ENCODE measurements at regions of chr3 and their contacts with region 1.

Region 1: GRCh38 chr3:57530071-57530608 is 14.0 kb downstream of the DNAH12 start:
- DNase-seq: peak; percentile 29 to 77
- H3K4me3 ChIP-seq: no peak overlapping the region
- H3K27ac ChIP-seq: peak overlapping the region; percentile 51
- H3K4me1 ChIP-seq: peaks cover 22% of the 10 kb centered on the region
- H3K27me3 ChIP-seq: no peaks in the 10 kb centered on the region
- CTCF ChIP-seq: no peak

Region 2: DNA sequence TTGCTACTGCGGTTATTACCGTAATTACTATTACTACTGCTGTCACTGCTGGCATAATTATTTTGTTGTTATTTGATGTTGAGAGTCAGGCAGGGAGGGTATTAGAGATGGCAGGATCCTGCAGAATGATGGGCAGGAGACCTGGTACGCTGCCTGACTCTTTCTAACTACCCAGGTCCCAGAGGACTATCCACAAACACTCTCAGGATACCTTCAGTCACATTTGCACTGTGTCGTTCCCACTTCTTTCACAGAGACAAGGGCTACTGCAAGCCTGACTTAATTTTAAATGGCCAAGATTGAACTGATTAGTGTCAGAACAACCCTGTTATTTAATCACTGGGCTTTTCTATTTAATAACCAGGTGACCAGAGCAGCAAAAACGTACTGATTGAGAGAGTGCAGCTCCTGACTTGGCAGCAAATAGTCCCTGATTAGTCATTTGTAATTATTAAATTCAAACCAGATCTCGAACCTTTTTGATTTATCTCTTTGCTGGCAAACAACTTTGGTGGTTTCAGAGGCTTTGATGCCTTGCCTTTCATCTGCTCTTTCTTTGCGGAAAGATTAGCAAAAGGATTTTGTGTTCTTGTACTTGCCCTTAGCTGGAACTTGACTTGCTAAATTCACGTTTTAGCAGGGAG is 639.6 kb before region 1 on chr3:
- CTCF ChIA-PET with region 1: no interaction called
- POLR2A ChIA-PET with region 1: no interaction called
- intact Hi-C with region 1: no loop called
- DNase-seq: no peak
- H3K4me3 ChIP-seq: no peak overlapping the region
- H3K27ac ChIP-seq: no peak overlapping the region
- H3K4me1 ChIP-seq: no peaks in the 10 kb centered on the region
- H3K27me3 ChIP-seq: no peaks in the 10 kb centered on the region
- CTCF ChIP-seq: no peak

Region 3: GRCh38 chr3:57518266-57518915 is 11.7 kb before region 1 on chr3:
- CTCF ChIA-PET with region 1: no interaction called
- POLR2A ChIA-PET with region 1: no interaction called
- intact Hi-C with region 1: loop called (anchors 1 kb)
- DNase-seq: peak; percentile 69 to 93
- H3K4me3 ChIP-seq: no peak overlapping the region; the same call in 1 of the 2 replicates
- H3K27ac ChIP-seq: peak overlapping the region; percentile 92
- H3K4me1 ChIP-seq: peaks cover 38% of the 10 kb centered on the region
- H3K27me3 ChIP-seq: no peaks in the 10 kb centered on the region
- CTCF ChIP-seq: no peak

Region 4: DNA sequence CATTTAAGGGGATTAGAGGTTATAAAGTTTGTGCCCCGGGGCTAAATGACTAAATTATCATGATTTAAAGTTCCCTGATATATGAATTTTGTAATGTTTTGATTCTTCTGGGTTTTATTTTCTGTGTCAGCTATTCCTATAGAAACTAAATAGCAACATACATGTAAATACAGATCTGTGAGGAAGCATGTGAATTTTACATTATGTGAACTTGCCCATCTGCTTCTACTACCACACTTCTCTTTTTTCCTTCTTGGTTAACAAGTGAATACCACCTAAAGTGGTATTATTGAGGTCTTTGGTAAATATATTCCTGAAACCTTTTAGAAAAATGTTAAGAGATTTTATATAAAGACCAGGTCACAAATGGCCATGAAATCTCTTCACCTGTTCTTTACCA is 255.3 kb after region 1 on chr3:
- CTCF ChIA-PET with region 1: no interaction called
- POLR2A ChIA-PET with region 1: interaction called, 17 read pairs
- intact Hi-C with region 1: no loop called
- DNase-seq: no peak
- H3K4me3 ChIP-seq: no peak overlapping the region
- H3K27ac ChIP-seq: peak overlapping the region; percentile 16; the same call in 1 of the 2 replicates
- H3K4me1 ChIP-seq: peaks cover 18% of the 10 kb centered on the region; the same call in 1 of the 2 replicates
- H3K27me3 ChIP-seq: no peaks in the 10 kb centered on the region
- CTCF ChIP-seq: no peak

Region 5: GRCh38 chr3:58288011-58288728 is 758.0 kb after region 1 on chr3:
- CTCF ChIA-PET with region 1: no interaction called
- POLR2A ChIA-PET with region 1: interaction called, 24 read pairs
- intact Hi-C with region 1: no loop called
- DNase-seq: no peak
- H3K4me3 ChIP-seq: no peak overlapping the region
- H3K27ac ChIP-seq: no peak overlapping the region
- H3K4me1 ChIP-seq: no peaks in the 10 kb centered on the region
- H3K27me3 ChIP-seq: no peaks in the 10 kb centered on the region
- CTCF ChIP-seq: no peak

Measured in PC-9 (cell line).